Posterior cingulate gyrus (tissue), 11 donors: ENCODE measurements at regions of chr10 and their contacts with region 1.

Region 1: GRCh38 chr10:69092959-69093850 is 5.3 kb downstream of the SRGN start:
- DNase-seq: peak in 5 of 10 donors; percentile 14 to 46 (median 40)

Region 2: GRCh38 chr10:69004821-69005220 is 88.4 kb before region 1 on chr10:
- intact Hi-C with region 1: loop called (anchors 2 kb)
- DNase-seq: no peak